Aorta (tissue), 5 donors: ENCODE measurements at regions of chr11 and their contacts with region 1.

Region 1: GRCh38 chr11:28697920-28698827 is 590.0 kb downstream of the METTL15 start:
- DNase-seq: peak; percentile 59 to 85
- ATAC-seq: no peak
- H3K4me3 ChIP-seq: no peak overlapping the region
- H3K27ac ChIP-seq: no peak overlapping the region
- H3K4me1 ChIP-seq: peaks cover 0 to 1% of the 10 kb centered on the region in 2 donors
- H3K27me3 ChIP-seq: no peaks in the 10 kb centered on the region

Region 2: GRCh38 chr11:27698872-27699474 is 999.2 kb before region 1 on chr11:
- intact Hi-C with region 1: loop called (anchors 5 to 10 kb)
- DNase-seq: peak; percentile 75 to 92
- ATAC-seq: peak; percentile 92
- H3K4me3 ChIP-seq: peak overlapping the region; percentile 55 to 95
- H3K27ac ChIP-seq: no peak overlapping the region
- H3K4me1 ChIP-seq: peaks cover 0 to 5% of the 10 kb centered on the region in 2 donors
- H3K27me3 ChIP-seq: no peaks in the 10 kb centered on the region

Region 3: GRCh38 chr11:27705873-27706820 is 992.0 kb before region 1 on chr11:
- intact Hi-C with region 1: loop called in 1 of 2 experiments (anchors 10 kb)
- DNase-seq: no peak
- ATAC-seq: no peak
- H3K4me3 ChIP-seq: no peak overlapping the region
- H3K27ac ChIP-seq: no peak overlapping the region
- H3K4me1 ChIP-seq: peaks cover 0 to 5% of the 10 kb centered on the region in 2 donors
- H3K27me3 ChIP-seq: no peaks in the 10 kb centered on the region

Region 4: GRCh38 chr11:29328961-29329441 is 630.8 kb after region 1 on chr11:
- intact Hi-C with region 1: loop called (anchors 10 kb)
- DNase-seq: no peak
- ATAC-seq: peak; percentile 63
- H3K4me3 ChIP-seq: no peak overlapping the region
- H3K27ac ChIP-seq: no peak overlapping the region
- H3K4me1 ChIP-seq: peaks cover under 1 to 1% of the 10 kb centered on the region in 2 donors
- H3K27me3 ChIP-seq: no peaks in the 10 kb centered on the region

Region 5: GRCh38 chr11:29333993-29334775 is 636.0 kb after region 1 on chr11:
- intact Hi-C with region 1: loop called (anchors 10 kb)
- DNase-seq: no peak
- ATAC-seq: no peak
- H3K4me3 ChIP-seq: no peak overlapping the region
- H3K27ac ChIP-seq: no peak overlapping the region
- H3K4me1 ChIP-seq: no peaks in the 10 kb centered on the region
- H3K27me3 ChIP-seq: no peaks in the 10 kb centered on the region